ENCODE measurements at regions of chr14 and their contacts with region 1.

Region 1: DNA sequence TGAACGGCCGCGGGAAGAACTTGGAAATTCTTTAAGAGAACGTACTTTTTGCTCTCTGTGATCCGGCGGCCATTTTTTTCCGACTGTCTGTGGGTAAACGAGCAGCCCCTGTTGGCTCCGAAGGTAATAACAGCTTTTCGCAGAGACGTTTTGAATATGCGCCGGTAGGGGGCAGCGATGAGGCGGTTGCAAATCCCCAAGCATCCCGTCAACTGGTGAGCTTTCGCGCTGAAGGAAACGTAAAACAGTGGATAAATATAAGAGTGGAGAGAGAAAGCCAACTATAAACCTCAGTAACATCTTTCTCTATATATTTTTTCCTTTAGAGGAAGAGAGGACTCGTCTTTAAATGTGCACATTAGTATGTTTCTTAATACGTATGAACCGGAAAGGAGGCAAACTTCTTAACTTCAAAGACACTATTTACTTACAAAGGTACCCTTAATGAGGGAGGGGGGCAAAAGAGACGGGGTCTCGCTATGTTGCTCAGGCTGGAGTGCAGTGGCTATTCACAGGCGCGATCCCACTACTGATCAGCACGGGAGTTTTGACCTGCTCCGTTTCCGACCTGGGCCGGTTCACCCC is 9.6 kb upstream of the NEMF start:
- DNase-seq: peak; percentile 74 to 94 (median 84)
- ATAC-seq: peak; percentile 33
- H3K4me3 ChIP-seq: peak overlapping the region; percentile 78
- H3K4me3 Mint-ChIP-seq: no peak overlapping the region
- H3K27ac ChIP-seq: peak overlapping the region; percentile 98
- H3K27ac Mint-ChIP-seq: no peak overlapping the region
- H3K4me1 ChIP-seq: peaks cover 43% of the 10 kb centered on the region
- H3K4me1 Mint-ChIP-seq: peaks cover 13% of the 10 kb centered on the region
- H3K27me3 ChIP-seq: no peaks in the 10 kb centered on the region
- H3K27me3 Mint-ChIP-seq: peaks cover 15% of the 10 kb centered on the region
- CTCF ChIP-seq: peak; percentile 100

Region 2: DNA sequence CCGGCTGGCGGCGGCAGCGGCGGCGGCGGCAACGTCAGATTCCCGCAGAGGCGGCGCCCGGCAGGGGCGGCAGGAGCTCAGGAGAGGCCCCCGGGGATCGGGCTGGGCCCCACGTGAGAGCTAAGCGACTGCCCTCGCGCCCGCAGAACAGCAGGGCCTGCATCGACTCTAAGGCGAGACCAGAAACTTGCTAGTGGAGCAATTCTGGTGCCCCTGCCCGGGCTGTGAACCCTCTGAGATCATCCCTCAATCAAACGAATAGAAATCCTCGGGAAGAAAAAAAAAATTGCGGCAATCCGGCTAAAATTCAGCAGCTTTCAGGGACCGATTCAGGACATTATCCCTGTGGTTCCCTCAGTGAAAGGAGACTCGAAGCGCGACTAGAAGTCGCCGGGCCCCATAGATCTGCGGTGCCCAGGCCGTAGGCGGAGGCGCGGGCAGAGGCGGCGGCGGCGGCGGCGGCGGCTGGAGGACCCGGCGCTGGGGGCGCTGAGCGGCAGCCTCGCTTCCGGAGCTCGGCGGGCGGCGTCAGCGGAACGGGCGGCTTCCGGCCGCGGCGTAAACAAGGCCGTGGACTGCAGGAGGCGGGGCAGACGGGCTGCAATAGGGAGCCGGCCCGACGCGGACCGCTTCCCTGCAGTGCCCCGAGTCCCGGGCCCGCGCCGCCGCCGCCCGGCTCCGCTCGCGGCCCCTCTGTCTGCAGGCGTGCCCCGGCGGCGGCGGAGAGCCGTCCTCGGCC is 94.5 kb before region 1 on chr14 and contains the start of gene KLHDC2:
- CTCF ChIA-PET with region 1: interaction called, 4 read pairs
- POLR2A ChIA-PET with region 1: interaction called, 50 read pairs
- intact Hi-C with region 1: no loop called
- DNase-seq: peak; percentile 78 to 95 (median 87)
- ATAC-seq: peak; percentile 65
- H3K4me3 ChIP-seq: peak within 1 kb of the TSS; percentile 96
- H3K4me3 Mint-ChIP-seq: peak within 1 kb of the TSS; percentile 100
- H3K27ac ChIP-seq: peak within 1 kb of the TSS; percentile 93 to 95
- H3K27ac Mint-ChIP-seq: peak within 1 kb of the TSS; percentile 99
- H3K4me1 ChIP-seq: peaks cover 35% of the 10 kb centered on the region
- H3K4me1 Mint-ChIP-seq: peaks cover 45% of the 10 kb centered on the region
- H3K27me3 ChIP-seq: no peaks in the 10 kb centered on the region
- H3K27me3 Mint-ChIP-seq: no peaks in the 10 kb centered on the region
- CTCF ChIP-seq: no peak
- total RNA-seq, gene KLHDC2: 142 to 143 TPM

Region 3: DNA sequence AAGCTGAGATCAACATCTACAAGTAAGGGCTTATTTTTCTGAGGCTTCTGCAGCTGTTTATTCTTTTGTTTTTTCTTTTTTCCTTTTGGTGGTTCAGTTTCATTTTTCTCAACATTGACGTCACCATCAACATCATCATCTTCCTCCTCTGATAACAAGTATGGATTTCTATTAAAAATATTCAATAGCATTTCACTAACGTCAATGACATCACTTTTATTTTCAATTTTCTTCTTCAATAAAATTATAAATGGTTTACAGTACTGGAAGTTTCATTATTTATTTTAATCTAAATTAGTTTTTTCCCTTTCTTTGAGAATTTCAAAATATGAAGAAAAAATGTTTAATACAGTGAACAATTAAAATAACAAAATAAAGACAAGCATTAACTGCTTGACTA is 33.5 kb before region 1 on chr14:
- CTCF ChIA-PET with region 1: no interaction called
- POLR2A ChIA-PET with region 1: no interaction called
- intact Hi-C with region 1: no loop called
- DNase-seq: no peak
- ATAC-seq: no peak
- H3K4me3 ChIP-seq: no peak overlapping the region
- H3K4me3 Mint-ChIP-seq: no peak overlapping the region
- H3K27ac ChIP-seq: no peak overlapping the region
- H3K27ac Mint-ChIP-seq: no peak overlapping the region
- H3K4me1 ChIP-seq: no peaks in the 10 kb centered on the region
- H3K4me1 Mint-ChIP-seq: peaks cover 5% of the 10 kb centered on the region
- H3K27me3 ChIP-seq: no peaks in the 10 kb centered on the region
- H3K27me3 Mint-ChIP-seq: no peaks in the 10 kb centered on the region
- CTCF ChIP-seq: no peak

Region 4: DNA sequence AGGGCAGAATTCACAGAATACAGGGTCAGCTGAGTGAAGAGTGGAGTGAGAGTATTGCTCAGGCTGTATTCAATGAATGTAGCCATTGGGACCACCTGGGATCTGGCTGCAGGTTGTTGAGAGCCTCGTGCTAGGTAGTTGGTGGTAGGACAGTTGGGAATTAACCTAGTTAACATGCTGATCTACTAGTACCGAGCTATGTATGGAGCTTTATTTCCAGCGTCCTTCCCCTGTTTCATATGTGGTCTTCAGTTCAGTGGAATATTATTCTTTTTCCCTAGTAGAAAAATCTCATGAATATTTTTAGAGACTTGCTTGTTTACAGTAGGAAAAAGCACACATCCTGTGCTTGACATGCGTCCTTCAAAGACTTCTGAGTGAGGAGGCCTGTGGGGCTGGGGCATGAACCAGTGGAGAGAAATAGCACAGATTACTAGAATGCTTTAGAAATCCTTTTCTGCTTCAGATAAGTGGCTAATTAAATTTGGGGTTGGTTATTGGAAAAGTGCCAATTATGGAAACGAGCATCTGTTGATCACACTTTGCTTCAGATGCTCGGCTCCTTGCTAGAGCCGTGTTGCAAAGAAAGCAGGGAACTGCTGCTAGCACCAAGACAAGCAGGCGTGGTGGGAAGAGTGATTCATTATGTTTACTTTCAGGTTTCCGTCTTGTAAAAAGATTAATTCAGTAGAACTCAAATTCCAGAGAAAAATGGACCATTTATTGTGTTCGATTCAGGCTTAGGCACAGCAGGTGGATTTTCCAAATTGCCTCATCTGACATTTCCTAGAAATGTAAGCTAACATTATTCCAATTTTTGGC is 84.3 kb after region 1 on chr14:
- CTCF ChIA-PET with region 1: interaction called, 5 read pairs
- POLR2A ChIA-PET with region 1: interaction called, 20 read pairs
- intact Hi-C with region 1: no loop called
- DNase-seq: peak in 10 of 14 experiments; percentile 10 to 66 (median 26)
- ATAC-seq: peak; percentile 72
- H3K4me3 ChIP-seq: no peak overlapping the region
- H3K4me3 Mint-ChIP-seq: peak overlapping the region; percentile 56
- H3K27ac ChIP-seq: peak overlapping the region; percentile 69 to 86
- H3K27ac Mint-ChIP-seq: peak overlapping the region; percentile 88
- H3K4me1 ChIP-seq: peaks cover 66% of the 10 kb centered on the region
- H3K4me1 Mint-ChIP-seq: peaks cover 78% of the 10 kb centered on the region
- H3K27me3 ChIP-seq: no peaks in the 10 kb centered on the region
- H3K27me3 Mint-ChIP-seq: no peaks in the 10 kb centered on the region
- CTCF ChIP-seq: no peak

Region 5: GRCh38 chr14:50038398-50039119 is 176.4 kb after region 1 on chr14:
- CTCF ChIA-PET with region 1: interaction called, 9 read pairs
- POLR2A ChIA-PET with region 1: interaction called, 15 read pairs
- intact Hi-C with region 1: loop called in 1 of 2 experiments (anchors 5 kb)
- DNase-seq: peak in 7 of 14 experiments; percentile 11 to 78 (median 49)
- ATAC-seq: peak; percentile 11
- H3K4me3 ChIP-seq: no peak overlapping the region
- H3K4me3 Mint-ChIP-seq: peak overlapping the region; percentile 65
- H3K27ac ChIP-seq: peak overlapping the region; percentile 8 to 66
- H3K27ac Mint-ChIP-seq: peak overlapping the region; percentile 55
- H3K4me1 ChIP-seq: peaks cover 62% of the 10 kb centered on the region
- H3K4me1 Mint-ChIP-seq: peaks cover 56% of the 10 kb centered on the region
- H3K27me3 ChIP-seq: no peaks in the 10 kb centered on the region
- H3K27me3 Mint-ChIP-seq: no peaks in the 10 kb centered on the region
- CTCF ChIP-seq: no peak

Region 6: DNA sequence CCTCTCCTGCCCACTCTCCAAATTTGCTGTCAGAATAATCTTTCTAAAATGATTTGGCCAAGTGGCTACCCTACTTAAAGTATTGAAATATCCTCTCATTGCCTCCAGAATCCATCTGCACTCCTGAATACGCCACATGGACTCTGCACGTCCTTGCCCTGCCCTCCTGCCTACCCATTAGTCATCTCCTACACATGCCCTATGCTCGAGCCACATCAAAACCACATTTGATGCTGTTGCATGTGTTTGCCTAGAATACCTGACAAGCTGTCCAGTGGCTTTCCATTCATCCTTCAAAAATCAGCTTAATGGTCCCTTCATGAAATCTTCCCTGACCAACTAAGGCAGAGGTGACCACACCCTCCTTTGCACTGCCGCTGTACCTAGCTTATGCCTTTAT is 237.2 kb after region 1 on chr14:
- CTCF ChIA-PET with region 1: interaction called, 15 read pairs
- POLR2A ChIA-PET with region 1: interaction called, 61 read pairs
- intact Hi-C with region 1: no loop called
- DNase-seq: peak in 1 of 14 experiments; percentile 39
- ATAC-seq: no peak
- H3K4me3 ChIP-seq: no peak overlapping the region
- H3K4me3 Mint-ChIP-seq: peak overlapping the region; percentile 12
- H3K27ac ChIP-seq: no peak overlapping the region
- H3K27ac Mint-ChIP-seq: peak overlapping the region; percentile 79
- H3K4me1 ChIP-seq: peaks cover 47% of the 10 kb centered on the region
- H3K4me1 Mint-ChIP-seq: peaks cover 64% of the 10 kb centered on the region
- H3K27me3 ChIP-seq: no peaks in the 10 kb centered on the region
- H3K27me3 Mint-ChIP-seq: no peaks in the 10 kb centered on the region
- CTCF ChIP-seq: no peak

Region 7: GRCh38 chr14:50830932-50831725 is 968.9 kb after region 1 on chr14 and contains the start of gene NIN:
- CTCF ChIA-PET with region 1: no interaction called
- POLR2A ChIA-PET with region 1: no interaction called
- intact Hi-C with region 1: loop called in 1 of 2 experiments (anchors 5 kb)
- DNase-seq: peak; percentile 47 to 89 (median 68)
- ATAC-seq: peak; percentile 83
- H3K4me3 ChIP-seq: peak within 1 kb of the TSS; percentile 90
- H3K4me3 Mint-ChIP-seq: peak within 1 kb of the TSS; percentile 99
- H3K27ac ChIP-seq: peak within 1 kb of the TSS; percentile 65 to 88
- H3K27ac Mint-ChIP-seq: peak within 1 kb of the TSS; percentile 92
- H3K4me1 ChIP-seq: peaks cover 37% of the 10 kb centered on the region
- H3K4me1 Mint-ChIP-seq: peaks cover 74% of the 10 kb centered on the region
- H3K27me3 ChIP-seq: no peaks in the 10 kb centered on the region
- H3K27me3 Mint-ChIP-seq: no peaks in the 10 kb centered on the region
- CTCF ChIP-seq: no peak
- total RNA-seq, gene NIN: 96.8 to 98.5 TPM